Panc1 (cell line): ENCODE measurements at regions of chr1 and their contacts with region 1.

Region 1: GRCh38 chr1:157490467-157491165 is 61.7 kb downstream of the FCRL5 start:
- DNase-seq: peak; percentile 17
- ATAC-seq: peak; percentile 80
- H3K4me3 ChIP-seq: no peak overlapping the region
- H3K27ac ChIP-seq: no peak overlapping the region
- H3K4me1 ChIP-seq: no peaks in the 10 kb centered on the region
- H3K27me3 ChIP-seq: peaks cover 2% of the 10 kb centered on the region; the same call in 1 of the 2 replicates
- CTCF ChIP-seq: peak; percentile 81

Region 2: GRCh38 chr1:157170677-157171515 is 319.7 kb before region 1 on chr1:
- CTCF ChIA-PET with region 1: no interaction called
- POLR2A ChIA-PET with region 1: no interaction called
- in situ Hi-C with region 1: no loop called
- intact Hi-C with region 1: loop called (anchors 1 kb)
- DNase-seq: no peak
- ATAC-seq: peak; percentile 43; the same call in 1 of the 2 replicates
- H3K4me3 ChIP-seq: no peak overlapping the region
- H3K27ac ChIP-seq: no peak overlapping the region
- H3K4me1 ChIP-seq: no peaks in the 10 kb centered on the region
- H3K27me3 ChIP-seq: peaks cover 22% of the 10 kb centered on the region
- CTCF ChIP-seq: peak; percentile 92

Region 3: DNA sequence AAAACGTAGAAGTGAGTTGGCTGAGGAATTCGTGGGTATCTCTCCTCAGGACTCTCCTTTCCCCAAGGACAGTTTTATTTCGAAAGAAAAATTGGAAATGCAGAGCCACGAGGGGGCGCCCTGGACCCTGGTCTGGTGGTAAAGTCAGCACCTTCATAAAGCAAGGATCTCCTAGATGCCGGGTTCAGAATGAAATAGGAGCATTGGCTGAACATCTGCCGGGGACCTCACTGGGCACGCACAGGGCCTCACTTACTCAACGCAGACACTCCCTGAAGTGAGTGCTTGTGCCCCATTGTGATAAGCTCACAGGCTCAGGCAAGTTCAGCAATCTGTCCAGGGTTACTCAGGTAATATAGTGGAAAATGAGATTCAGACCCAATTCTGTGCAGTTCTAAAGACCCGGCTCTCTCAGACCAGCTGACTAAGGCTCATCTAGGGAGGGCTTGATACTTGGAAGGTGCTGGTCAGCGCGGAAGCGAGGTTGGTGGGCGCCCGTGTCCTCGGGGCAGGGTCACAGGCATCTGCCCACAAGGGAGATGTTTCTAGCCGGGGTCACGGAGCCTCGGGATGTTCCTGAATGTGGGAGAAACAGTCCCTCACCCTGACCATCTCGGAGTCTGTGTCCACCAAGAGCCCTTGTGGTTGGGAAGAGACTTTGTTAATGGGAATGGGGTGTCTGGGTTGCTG is 296.8 kb before region 1 on chr1:
- CTCF ChIA-PET with region 1: no interaction called
- POLR2A ChIA-PET with region 1: no interaction called
- in situ Hi-C with region 1: no loop called
- intact Hi-C with region 1: loop called (anchors 2 kb)
- DNase-seq: peak; percentile 30
- ATAC-seq: peak; percentile 75
- H3K4me3 ChIP-seq: no peak overlapping the region
- H3K27ac ChIP-seq: no peak overlapping the region
- H3K4me1 ChIP-seq: no peaks in the 10 kb centered on the region
- H3K27me3 ChIP-seq: peaks cover 10% of the 10 kb centered on the region
- CTCF ChIP-seq: peak; percentile 95

Region 4: GRCh38 chr1:157209514-157209913 is 281.1 kb before region 1 on chr1:
- CTCF ChIA-PET with region 1: no interaction called
- POLR2A ChIA-PET with region 1: no interaction called
- in situ Hi-C with region 1: no loop called
- intact Hi-C with region 1: no loop called
- DNase-seq: no peak
- ATAC-seq: no peak
- H3K4me3 ChIP-seq: no peak overlapping the region
- H3K27ac ChIP-seq: no peak overlapping the region
- H3K4me1 ChIP-seq: no peaks in the 10 kb centered on the region
- H3K27me3 ChIP-seq: no peaks in the 10 kb centered on the region; the same call in 1 of the 2 replicates
- CTCF ChIP-seq: no peak

Region 5: GRCh38 chr1:157369808-157370521 is 120.7 kb before region 1 on chr1:
- CTCF ChIA-PET with region 1: interaction called, 5 read pairs
- POLR2A ChIA-PET with region 1: no interaction called
- in situ Hi-C with region 1: no loop called
- intact Hi-C with region 1: loop called (anchors 2 kb)
- DNase-seq: peak; percentile 47
- ATAC-seq: peak; percentile 83
- H3K4me3 ChIP-seq: no peak overlapping the region
- H3K27ac ChIP-seq: no peak overlapping the region
- H3K4me1 ChIP-seq: no peaks in the 10 kb centered on the region
- H3K27me3 ChIP-seq: no peaks in the 10 kb centered on the region; the same call in 1 of the 2 replicates
- CTCF ChIP-seq: peak; percentile 92

Region 6: DNA sequence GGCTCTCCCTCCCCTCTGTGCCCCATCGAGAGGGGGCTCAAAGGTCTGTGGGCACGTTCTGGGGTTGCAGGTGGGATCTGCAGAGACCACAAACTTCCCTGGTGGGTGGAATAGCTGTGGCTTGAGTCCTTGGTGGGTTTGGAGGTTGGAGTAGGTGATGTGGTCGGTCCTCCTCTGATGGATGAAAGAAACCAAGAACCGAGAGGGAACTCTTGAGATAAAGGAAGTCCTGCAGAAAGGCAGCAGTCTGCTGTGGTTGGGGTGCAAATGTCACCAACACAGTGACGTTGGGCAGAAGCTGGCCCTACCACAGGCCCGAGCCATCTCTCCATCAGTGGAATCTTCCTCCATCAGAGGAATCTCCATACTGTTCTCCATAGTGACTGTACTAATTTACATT is 110.1 kb before region 1 on chr1:
- CTCF ChIA-PET with region 1: interaction called, 3 read pairs
- POLR2A ChIA-PET with region 1: no interaction called
- in situ Hi-C with region 1: no loop called
- intact Hi-C with region 1: loop called (anchors 1 kb)
- DNase-seq: no peak
- ATAC-seq: no peak
- H3K4me3 ChIP-seq: no peak overlapping the region
- H3K27ac ChIP-seq: no peak overlapping the region
- H3K4me1 ChIP-seq: no peaks in the 10 kb centered on the region
- H3K27me3 ChIP-seq: peaks cover 15% of the 10 kb centered on the region
- CTCF ChIP-seq: no peak

Region 7: GRCh38 chr1:157781048-157781447 is 290.4 kb after region 1 on chr1:
- CTCF ChIA-PET with region 1: no interaction called
- POLR2A ChIA-PET with region 1: no interaction called
- in situ Hi-C with region 1: no loop called
- intact Hi-C with region 1: no loop called
- DNase-seq: no peak
- ATAC-seq: no peak
- H3K4me3 ChIP-seq: no peak overlapping the region
- H3K27ac ChIP-seq: no peak overlapping the region
- H3K4me1 ChIP-seq: no peaks in the 10 kb centered on the region
- H3K27me3 ChIP-seq: no peaks in the 10 kb centered on the region
- CTCF ChIP-seq: no peak